PC-3 (cell line): ENCODE measurements at regions of chr2 and their contacts with region 1.

Region 1: GRCh38 chr2:219294356-219295351 is 14.5 kb downstream of the PTPRN start:
- DNase-seq: peak; percentile 93
- ATAC-seq: peak; percentile 81
- H3K4me3 ChIP-seq: peak overlapping the region; percentile 72
- H3K27ac ChIP-seq: no peak overlapping the region
- H3K4me1 ChIP-seq: peaks cover 20% of the 10 kb centered on the region
- H3K27me3 ChIP-seq: no peaks in the 10 kb centered on the region
- CTCF ChIP-seq: peak; percentile 95

Region 2: DNA sequence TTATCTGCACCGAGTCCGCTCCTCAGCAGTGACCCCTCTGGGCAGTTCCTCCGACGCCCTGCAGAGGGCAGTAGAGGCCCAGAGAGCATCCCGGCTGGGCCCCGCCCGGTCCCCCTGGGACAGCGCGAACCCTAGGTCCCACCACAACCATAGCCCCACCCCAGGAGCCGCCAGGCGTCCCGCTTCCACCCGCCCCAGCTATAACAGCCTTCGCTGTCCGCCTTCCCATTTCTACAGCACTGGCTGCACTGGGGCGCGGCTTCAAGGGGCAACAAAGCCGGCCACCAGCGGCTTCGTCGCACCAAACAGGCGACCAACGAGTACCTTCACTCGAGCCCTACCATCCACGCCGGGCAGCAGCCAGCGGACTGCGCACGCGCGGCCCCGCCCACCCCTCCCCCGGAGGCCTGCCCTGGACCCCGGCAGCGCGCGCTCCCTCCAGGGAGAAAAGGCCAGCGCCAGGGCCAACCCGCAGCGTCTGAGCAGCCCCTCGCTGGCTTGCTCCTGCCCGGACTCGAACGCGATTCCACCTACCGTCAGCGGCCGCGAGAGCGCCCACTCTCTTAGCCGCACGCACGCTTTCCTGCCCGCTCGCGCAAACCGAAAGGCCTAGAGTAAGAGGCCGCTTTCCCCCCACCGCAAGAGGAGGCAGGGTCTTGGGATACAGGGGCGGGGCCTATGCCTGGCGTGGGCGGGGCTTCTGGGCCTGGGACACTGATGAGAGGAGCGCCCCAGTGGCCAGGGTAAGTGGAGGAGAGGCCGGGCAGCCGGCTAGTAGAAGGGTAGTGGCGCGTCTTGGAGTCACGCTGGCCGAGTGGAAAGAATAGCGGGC is 134.3 kb before region 1 on chr2 and contains the start of gene NHEJ1:
- CTCF ChIA-PET with region 1: interaction called, 3 read pairs
- POLR2A ChIA-PET with region 1: no interaction called
- intact Hi-C with region 1: loop called (anchors 1 kb)
- DNase-seq: peak; percentile 92
- ATAC-seq: peak; percentile 91
- H3K4me3 ChIP-seq: peak within 1 kb of the TSS; percentile 79
- H3K27ac ChIP-seq: peak within 1 kb of the TSS; percentile 62
- H3K4me1 ChIP-seq: peaks cover 26% of the 10 kb centered on the region
- H3K27me3 ChIP-seq: no peaks in the 10 kb centered on the region
- CTCF ChIP-seq: peak; percentile 90
- total RNA-seq, gene NHEJ1: 16.7 and 18.5 TPM in 2 replicates

Region 3: DNA sequence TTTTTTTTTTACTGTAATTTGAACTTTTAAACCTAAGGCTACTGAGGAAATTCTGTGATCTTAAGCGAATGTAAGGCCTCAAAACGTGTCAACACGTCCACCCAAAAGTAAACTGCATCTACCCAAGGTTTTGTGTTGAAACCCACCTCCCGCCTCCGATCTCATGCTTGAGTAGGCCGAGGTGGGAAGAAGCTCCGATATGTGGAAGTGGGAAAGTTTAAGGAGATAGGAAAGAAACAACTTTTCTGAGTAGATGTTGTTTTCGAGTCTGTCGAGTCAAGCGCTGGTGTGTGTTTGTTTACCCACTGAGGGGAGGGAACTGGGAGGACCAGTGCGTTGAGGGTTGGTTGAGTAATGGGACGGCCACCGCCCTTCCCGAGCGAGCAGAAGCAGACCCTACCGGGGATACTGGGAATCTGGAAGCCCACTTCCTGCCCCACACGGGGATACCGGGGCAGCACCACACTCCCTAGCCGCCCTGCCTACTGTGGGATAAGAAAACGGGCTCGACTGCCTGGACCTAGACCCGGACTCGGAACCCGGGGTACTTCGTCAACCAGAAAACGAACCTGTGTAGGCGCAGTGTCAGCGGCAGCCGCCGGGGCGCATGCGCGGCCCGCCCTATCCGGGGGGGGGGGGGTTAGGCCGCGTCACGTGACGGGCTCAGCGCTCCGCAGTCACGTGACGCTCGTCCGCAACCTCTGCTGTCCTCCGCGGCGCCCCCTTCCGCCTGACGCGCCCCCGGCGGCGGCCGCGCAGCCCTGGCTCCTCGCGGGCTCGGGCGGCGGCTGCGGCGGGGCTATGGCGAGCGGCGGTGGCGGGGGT is 116.9 kb before region 1 on chr2 and contains the start of gene RETREG2:
- CTCF ChIA-PET with region 1: interaction called, 5 read pairs
- POLR2A ChIA-PET with region 1: interaction called, 4 read pairs
- intact Hi-C with region 1: loop called (anchors 5 kb)
- DNase-seq: peak; percentile 87
- ATAC-seq: peak; percentile 70
- H3K4me3 ChIP-seq: peak within 1 kb of the TSS; percentile 83
- H3K27ac ChIP-seq: peak within 1 kb of the TSS; percentile 94
- H3K4me1 ChIP-seq: peaks cover 24% of the 10 kb centered on the region
- H3K27me3 ChIP-seq: no peaks in the 10 kb centered on the region
- CTCF ChIP-seq: no peak; the same call in 1 of the 2 replicates
- total RNA-seq, gene RETREG2: 61.0 and 87.2 TPM in 2 replicates

Region 4: GRCh38 chr2:219218732-219219701 is 75.6 kb before region 1 on chr2 and contains the start of gene ABCB6:
- CTCF ChIA-PET with region 1: interaction called, 6 read pairs
- POLR2A ChIA-PET with region 1: no interaction called
- intact Hi-C with region 1: loop called (anchors 1 kb)
- DNase-seq: peak; percentile 83
- ATAC-seq: peak; percentile 66
- H3K4me3 ChIP-seq: peak within 1 kb of the TSS; percentile 69
- H3K27ac ChIP-seq: peak within 1 kb of the TSS; percentile 77
- H3K4me1 ChIP-seq: peaks cover 19% of the 10 kb centered on the region
- H3K27me3 ChIP-seq: no peaks in the 10 kb centered on the region
- CTCF ChIP-seq: no peak
- total RNA-seq, gene ABCB6: 21.1 and 23.9 TPM in 2 replicates

Region 5: GRCh38 chr2:219253753-219254590 is 40.7 kb before region 1 on chr2 and contains the start of gene TUBA4A:
- CTCF ChIA-PET with region 1: interaction called, 17 read pairs
- POLR2A ChIA-PET with region 1: interaction called, 3 read pairs
- intact Hi-C with region 1: loop called (anchors 2 kb)
- DNase-seq: peak; percentile 90
- ATAC-seq: peak; percentile 58
- H3K4me3 ChIP-seq: peak within 1 kb of the TSS; percentile 74
- H3K27ac ChIP-seq: peak within 1 kb of the TSS; percentile 33
- H3K4me1 ChIP-seq: peaks cover 38% of the 10 kb centered on the region
- H3K27me3 ChIP-seq: no peaks in the 10 kb centered on the region
- CTCF ChIP-seq: no peak
- total RNA-seq, gene TUBA4A: 75.4 and 87.9 TPM in 2 replicates